ENCODE measurements at regions of chr5 and their contacts with region 1.

Region 1: GRCh38 chr5:141192110-141192732 is at the start of gene PCDHB10:
- DNase-seq: peak in 1 of 2 experiments; percentile 92
- H3K4me3 ChIP-seq: peak within 1 kb of the TSS; percentile 14 to 46 (median 35); a peak in 6 of 8 replicates
- H3K27ac ChIP-seq: no peak within 1 kb of the TSS
- H3K4me1 ChIP-seq: no peaks in the 10 kb centered on the region; a peak in 1 of 7 replicates
- H3K27me3 ChIP-seq: no peaks in the 10 kb centered on the region
- CTCF ChIP-seq: peak; percentile 72 to 83 (median 83)
- EP300 ChIP-seq: no peak
- POLR2A ChIP-seq: no peak
- RAD21 ChIP-seq: peak; percentile 82 to 84
- total RNA-seq, gene PCDHB10: 1.8 and 1.9 TPM in 2 replicates

Region 2: GRCh38 chr5:141172378-141173204 is 19.6 kb before region 1 on chr5 and contains the start of gene PCDHB7:
- CTCF ChIA-PET with region 1: interaction called, 21 read pairs
- POLR2A ChIA-PET with region 1: no interaction called
- DNase-seq: no peak
- H3K4me3 ChIP-seq: no peak within 1 kb of the TSS
- H3K27ac ChIP-seq: no peak within 1 kb of the TSS
- H3K4me1 ChIP-seq: no peaks in the 10 kb centered on the region
- H3K27me3 ChIP-seq: no peaks in the 10 kb centered on the region
- CTCF ChIP-seq: peak in 2 of 3 experiments; percentile 60 to 70; a peak in 3 of 4 replicates
- EP300 ChIP-seq: no peak
- POLR2A ChIP-seq: no peak
- RAD21 ChIP-seq: peak; percentile 69 to 71
- total RNA-seq, gene PCDHB7: 0.19 and 0.25 TPM in 2 replicates

Region 3: DNA sequence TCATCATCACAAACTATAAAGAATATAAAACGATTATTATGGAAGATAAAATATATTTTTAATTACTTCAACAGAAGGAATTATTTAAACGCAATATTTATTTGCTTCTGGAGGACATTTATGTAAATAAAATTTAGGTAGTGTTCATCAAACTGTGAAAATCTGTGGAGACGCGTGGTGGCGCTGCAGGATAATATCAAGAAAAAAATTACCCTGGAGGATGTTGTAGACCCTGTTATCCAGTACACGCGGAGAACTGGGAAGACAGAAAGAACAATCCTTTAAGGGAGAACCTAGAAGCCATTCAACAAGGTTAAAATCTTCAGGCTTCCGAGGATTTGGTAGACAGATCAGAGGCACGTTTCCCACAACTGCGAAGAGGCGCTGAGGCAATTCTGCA is 16.3 kb after region 1 on chr5 and contains the start of gene PCDHB12:
- CTCF ChIA-PET with region 1: interaction called, 36 read pairs
- POLR2A ChIA-PET with region 1: no interaction called
- DNase-seq: no peak
- H3K4me3 ChIP-seq: peak within 1 kb of the TSS in 2 of 4 experiments; percentile 10 to 34; a peak in 2 of 8 replicates
- H3K27ac ChIP-seq: no peak within 1 kb of the TSS
- H3K4me1 ChIP-seq: no peaks in the 10 kb centered on the region
- H3K27me3 ChIP-seq: no peaks in the 10 kb centered on the region
- CTCF ChIP-seq: peak in 2 of 3 experiments; percentile 11 to 48; a peak in 3 of 4 replicates
- EP300 ChIP-seq: no peak
- POLR2A ChIP-seq: no peak
- RAD21 ChIP-seq: peak; percentile 42 to 45
- total RNA-seq, gene PCDHB12: 2.0 and 3.0 TPM in 2 replicates